ENCODE measurements at regions of chr16 and their contacts with region 1.

Region 1: DNA sequence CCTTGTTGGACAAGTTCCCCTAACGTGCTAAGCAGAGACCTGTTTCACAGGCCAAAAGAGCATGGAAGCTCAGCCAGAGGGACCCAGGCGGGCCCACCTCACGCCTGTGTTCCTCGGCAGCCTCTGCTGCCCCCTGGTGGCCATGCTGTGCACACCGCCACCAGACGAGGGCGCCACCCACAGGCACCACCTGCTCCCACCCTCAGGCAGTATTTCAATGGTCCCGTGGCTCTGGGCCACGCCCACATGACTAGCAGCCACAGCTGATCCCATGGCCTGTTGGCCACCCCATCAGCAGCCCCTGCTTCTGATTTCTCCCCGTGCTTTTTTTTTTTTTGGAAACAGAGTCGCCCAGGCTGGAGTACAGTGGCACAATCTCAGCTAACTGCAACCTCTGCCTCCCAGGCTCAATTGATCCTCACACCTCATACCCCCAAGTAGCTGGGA is 18.9 kb downstream of the MPG start:
- DNase-seq: peak; percentile 95
- ATAC-seq: peak; percentile 99
- H3K4me3 ChIP-seq: no peak overlapping the region
- H3K4me3 Mint-ChIP-seq: no peak overlapping the region
- H3K27ac ChIP-seq: no peak overlapping the region
- H3K27ac Mint-ChIP-seq: peak overlapping the region; percentile 62
- H3K4me1 ChIP-seq: peaks cover 0 to 10% of the 10 kb centered on the region in 2 donors
- H3K4me1 Mint-ChIP-seq: peaks cover 6% of the 10 kb centered on the region
- H3K27me3 ChIP-seq: no peaks in the 10 kb centered on the region
- H3K27me3 Mint-ChIP-seq: no peaks in the 10 kb centered on the region
- CTCF ChIP-seq: peak; percentile 97

Region 2: GRCh38 chr16:38939-39892 is 57.7 kb before region 1 on chr16:
- CTCF ChIA-PET with region 1: interaction called, 17 read pairs
- POLR2A ChIA-PET with region 1: no interaction called
- intact Hi-C with region 1: no loop called
- DNase-seq: peak; percentile 93
- ATAC-seq: peak; percentile 86
- H3K4me3 ChIP-seq: peak overlapping the region in 1 of 5 experiments; percentile 39
- H3K4me3 Mint-ChIP-seq: peak overlapping the region; percentile 75
- H3K27ac ChIP-seq: peak overlapping the region; percentile 91 to 99
- H3K27ac Mint-ChIP-seq: peak overlapping the region; percentile 94
- H3K4me1 ChIP-seq: peaks cover 57 to 69% of the 10 kb centered on the region in 2 donors
- H3K4me1 Mint-ChIP-seq: peaks cover 73% of the 10 kb centered on the region
- H3K27me3 ChIP-seq: no peaks in the 10 kb centered on the region
- H3K27me3 Mint-ChIP-seq: no peaks in the 10 kb centered on the region
- CTCF ChIP-seq: no peak

Region 3: GRCh38 chr16:53346-54236 is 43.4 kb before region 1 on chr16 and contains the starts of genes POLR3K and SNRNP25:
- CTCF ChIA-PET with region 1: interaction called, 9 read pairs
- POLR2A ChIA-PET with region 1: interaction called, 3 read pairs
- intact Hi-C with region 1: loop called (anchors 1 kb)
- DNase-seq: peak; percentile 97
- ATAC-seq: peak; percentile 95
- H3K4me3 ChIP-seq: peak within 1 kb of the TSS; percentile 69 to 87 (median 82)
- H3K4me3 Mint-ChIP-seq: peak within 1 kb of the TSS; percentile 97
- H3K27ac ChIP-seq: peak within 1 kb of the TSS; percentile 52 to 82
- H3K27ac Mint-ChIP-seq: peak within 1 kb of the TSS; percentile 92
- H3K4me1 ChIP-seq: peaks cover 13 to 33% of the 10 kb centered on the region in 2 donors
- H3K4me1 Mint-ChIP-seq: peaks cover 31% of the 10 kb centered on the region
- H3K27me3 ChIP-seq: no peaks in the 10 kb centered on the region
- H3K27me3 Mint-ChIP-seq: no peaks in the 10 kb centered on the region
- CTCF ChIP-seq: no peak
- total RNA-seq, gene POLR3K: 28.3 and 34.9 TPM in 2 replicates
- total RNA-seq, gene SNRNP25: 24.3 and 25.5 TPM in 2 replicates

Region 4: GRCh38 chr16:77807-78443 is 19.0 kb before region 1 on chr16 and contains the start of gene MPG:
- CTCF ChIA-PET with region 1: interaction called, 401 read pairs
- POLR2A ChIA-PET with region 1: interaction called, 3 read pairs
- intact Hi-C with region 1: loop called (anchors 1 kb)
- DNase-seq: peak; percentile 86
- ATAC-seq: peak; percentile 87
- H3K4me3 ChIP-seq: peak within 1 kb of the TSS; percentile 24 to 82 (median 77)
- H3K4me3 Mint-ChIP-seq: peak within 1 kb of the TSS; percentile 90
- H3K27ac ChIP-seq: peak within 1 kb of the TSS; percentile 18 to 75
- H3K27ac Mint-ChIP-seq: peak within 1 kb of the TSS; percentile 86
- H3K4me1 ChIP-seq: peaks cover 27 to 29% of the 10 kb centered on the region in 2 donors
- H3K4me1 Mint-ChIP-seq: peaks cover 30% of the 10 kb centered on the region
- H3K27me3 ChIP-seq: peaks cover 0 to 17% (median 9%) of the 10 kb centered on the region in 4 experiments
- H3K27me3 Mint-ChIP-seq: peaks cover 13% of the 10 kb centered on the region
- CTCF ChIP-seq: no peak
- total RNA-seq, gene MPG: 58.3 and 66.4 TPM in 2 replicates

Region 5: DNA sequence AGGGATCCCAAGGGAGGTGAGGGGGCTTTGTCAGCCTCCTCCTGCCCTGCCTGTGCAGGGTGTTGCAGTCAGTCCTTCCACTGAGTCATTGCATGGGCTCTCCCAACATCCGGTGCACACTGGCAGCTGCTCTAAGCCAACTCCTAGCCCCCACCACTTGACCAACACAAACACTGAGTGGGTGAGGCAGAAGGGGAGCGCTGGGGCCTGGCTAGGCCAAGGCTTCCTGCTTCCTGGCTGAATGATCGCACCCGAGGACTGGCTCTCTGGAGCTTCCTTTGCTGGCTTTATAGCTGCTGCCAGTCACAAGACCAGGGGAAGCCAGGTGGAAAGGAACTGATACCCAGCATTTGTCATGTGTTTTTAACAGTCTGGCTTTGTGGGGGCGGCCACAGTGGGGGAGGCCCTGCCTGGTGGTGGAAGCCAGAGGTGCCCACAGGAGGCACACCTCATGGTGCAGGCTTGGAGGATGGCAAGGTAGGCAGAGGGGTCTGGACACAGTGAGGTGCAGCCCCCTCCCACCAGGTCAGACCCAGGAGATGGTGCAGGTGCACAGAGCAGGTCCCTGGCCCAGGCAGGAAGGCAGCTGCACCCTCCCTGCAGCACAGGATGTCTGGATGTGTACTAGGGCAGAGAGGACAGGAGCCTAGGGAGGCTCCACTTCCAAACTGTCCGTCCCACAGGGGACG is 12.1 kb before region 1 on chr16:
- CTCF ChIA-PET with region 1: interaction called, 31 read pairs
- POLR2A ChIA-PET with region 1: interaction called, 3 read pairs
- intact Hi-C with region 1: no loop called
- DNase-seq: peak; percentile 87
- ATAC-seq: peak; percentile 80
- H3K4me3 ChIP-seq: no peak overlapping the region
- H3K4me3 Mint-ChIP-seq: peak overlapping the region; percentile 80
- H3K27ac ChIP-seq: peak overlapping the region; percentile 86 to 93
- H3K27ac Mint-ChIP-seq: peak overlapping the region; percentile 96
- H3K4me1 ChIP-seq: peaks cover 21 to 26% of the 10 kb centered on the region in 2 donors
- H3K4me1 Mint-ChIP-seq: peaks cover 26% of the 10 kb centered on the region
- H3K27me3 ChIP-seq: no peaks in the 10 kb centered on the region
- H3K27me3 Mint-ChIP-seq: no peaks in the 10 kb centered on the region
- CTCF ChIP-seq: no peak